GM12878 (cell line): ENCODE measurements at regions of chr12 and their contacts with region 1.

Region 1: GRCh38 chr12:11581179-11581755 is 68.2 kb upstream of the ETV6 start:
- DNase-seq: no peak
- ATAC-seq: no peak
- H3K4me3 ChIP-seq: no peak overlapping the region
- H3K27ac ChIP-seq: peak overlapping the region; percentile 48; the same call in 1 of the 2 replicates
- H3K4me1 ChIP-seq: peaks cover 38% of the 10 kb centered on the region
- H3K27me3 ChIP-seq: no peaks in the 10 kb centered on the region
- CTCF ChIP-seq: peak; percentile 34 to 58 (median 37); a peak in 3 of 6 replicates
- EP300 ChIP-seq: no peak
- POLR2A ChIP-seq: no peak
- RAD21 ChIP-seq: peak; percentile 91

Region 2: DNA sequence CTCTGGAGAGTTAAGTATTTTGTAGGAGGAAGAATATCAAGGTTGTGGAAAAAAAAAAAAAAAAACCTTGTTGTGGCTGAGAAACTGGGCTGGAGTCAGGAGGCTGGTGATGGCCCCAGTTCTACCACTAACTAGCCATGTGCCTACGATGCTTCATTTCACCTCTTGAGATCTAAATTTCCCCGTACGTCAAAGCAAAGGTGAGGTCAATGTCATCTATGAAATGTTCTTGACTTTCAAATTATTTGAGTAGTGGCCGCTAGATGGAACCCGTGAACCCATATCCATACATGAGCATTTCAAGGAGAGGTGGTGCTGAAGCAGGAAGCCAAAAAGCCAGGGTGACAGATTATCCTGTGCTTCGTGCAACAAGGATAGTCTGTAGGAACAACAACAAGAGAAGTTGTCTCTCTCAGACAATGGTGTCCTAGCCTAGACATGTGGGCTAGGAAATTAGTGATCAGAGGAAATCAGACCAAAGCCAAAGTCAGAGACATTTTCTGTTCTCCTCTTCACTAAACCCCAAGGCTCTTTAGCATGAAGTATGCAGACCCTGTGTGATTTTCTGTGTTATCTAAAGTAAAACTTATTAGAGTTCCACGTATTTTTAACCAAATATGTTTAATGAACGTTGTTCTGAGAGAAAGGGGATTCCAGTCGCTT is 27.3 kb before region 1 on chr12:
- CTCF ChIA-PET with region 1: interaction called, 148 read pairs
- POLR2A ChIA-PET with region 1: interaction called, 64 read pairs
- RAD21 ChIA-PET with region 1: interaction called, 322 read pairs
- SMC1A ChIA-PET with region 1: interaction called, 225 read pairs
- in situ Hi-C with region 1: no loop called
- intact Hi-C with region 1: loop called (anchors 1 kb)
- DNase-seq: peak; percentile 88
- ATAC-seq: peak; percentile 87
- H3K4me3 ChIP-seq: no peak overlapping the region
- H3K27ac ChIP-seq: peak overlapping the region; percentile 70
- H3K4me1 ChIP-seq: peaks cover 4% of the 10 kb centered on the region; the same call in 1 of the 2 replicates
- H3K27me3 ChIP-seq: no peaks in the 10 kb centered on the region
- CTCF ChIP-seq: peak; percentile 61 to 77 (median 63)
- EP300 ChIP-seq: peak; percentile 45 to 58; a peak in 2 of 4 replicates
- POLR2A ChIP-seq: no peak
- RAD21 ChIP-seq: peak; percentile 88

Region 3: DNA sequence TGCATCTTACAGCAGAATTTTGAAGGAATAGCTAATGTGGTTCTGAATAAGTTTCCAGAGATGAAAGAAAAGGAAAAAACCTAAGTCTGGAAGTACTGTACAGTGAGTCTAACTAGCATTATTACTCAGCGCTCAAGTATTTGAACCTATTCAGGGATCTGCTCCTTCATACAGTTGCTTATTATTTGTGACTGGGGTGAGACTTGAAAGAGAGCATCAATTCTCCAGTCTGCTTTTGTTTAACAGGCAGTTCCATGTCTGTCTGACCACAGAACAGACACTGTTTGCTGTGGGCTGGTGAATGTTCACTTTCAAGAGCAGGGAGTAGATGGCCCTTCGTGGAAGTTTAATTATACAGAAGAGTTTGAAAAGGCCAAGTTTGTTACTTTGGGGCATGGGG is 77.5 kb after region 1 on chr12:
- CTCF ChIA-PET with region 1: interaction called, 4 read pairs
- POLR2A ChIA-PET with region 1: interaction called, 3 read pairs
- RAD21 ChIA-PET with region 1: interaction called, 13 read pairs
- SMC1A ChIA-PET with region 1: interaction called, 28 read pairs
- in situ Hi-C with region 1: no loop called
- intact Hi-C with region 1: no loop called
- DNase-seq: no peak
- ATAC-seq: no peak
- H3K4me3 ChIP-seq: no peak overlapping the region
- H3K27ac ChIP-seq: no peak overlapping the region
- H3K4me1 ChIP-seq: peaks cover 23% of the 10 kb centered on the region
- H3K27me3 ChIP-seq: no peaks in the 10 kb centered on the region
- CTCF ChIP-seq: no peak
- EP300 ChIP-seq: no peak
- POLR2A ChIP-seq: no peak
- RAD21 ChIP-seq: no peak

Region 4: GRCh38 chr12:11688831-11689230 is 107.6 kb after region 1 on chr12:
- CTCF ChIA-PET with region 1: no interaction called
- POLR2A ChIA-PET with region 1: no interaction called
- RAD21 ChIA-PET with region 1: no interaction called
- SMC1A ChIA-PET with region 1: no interaction called
- in situ Hi-C with region 1: no loop called
- intact Hi-C with region 1: no loop called
- DNase-seq: no peak
- ATAC-seq: no peak
- H3K4me3 ChIP-seq: no peak overlapping the region
- H3K27ac ChIP-seq: no peak overlapping the region
- H3K4me1 ChIP-seq: peaks cover 10% of the 10 kb centered on the region
- H3K27me3 ChIP-seq: no peaks in the 10 kb centered on the region
- CTCF ChIP-seq: no peak
- EP300 ChIP-seq: no peak
- POLR2A ChIP-seq: no peak
- RAD21 ChIP-seq: no peak

Region 5: DNA sequence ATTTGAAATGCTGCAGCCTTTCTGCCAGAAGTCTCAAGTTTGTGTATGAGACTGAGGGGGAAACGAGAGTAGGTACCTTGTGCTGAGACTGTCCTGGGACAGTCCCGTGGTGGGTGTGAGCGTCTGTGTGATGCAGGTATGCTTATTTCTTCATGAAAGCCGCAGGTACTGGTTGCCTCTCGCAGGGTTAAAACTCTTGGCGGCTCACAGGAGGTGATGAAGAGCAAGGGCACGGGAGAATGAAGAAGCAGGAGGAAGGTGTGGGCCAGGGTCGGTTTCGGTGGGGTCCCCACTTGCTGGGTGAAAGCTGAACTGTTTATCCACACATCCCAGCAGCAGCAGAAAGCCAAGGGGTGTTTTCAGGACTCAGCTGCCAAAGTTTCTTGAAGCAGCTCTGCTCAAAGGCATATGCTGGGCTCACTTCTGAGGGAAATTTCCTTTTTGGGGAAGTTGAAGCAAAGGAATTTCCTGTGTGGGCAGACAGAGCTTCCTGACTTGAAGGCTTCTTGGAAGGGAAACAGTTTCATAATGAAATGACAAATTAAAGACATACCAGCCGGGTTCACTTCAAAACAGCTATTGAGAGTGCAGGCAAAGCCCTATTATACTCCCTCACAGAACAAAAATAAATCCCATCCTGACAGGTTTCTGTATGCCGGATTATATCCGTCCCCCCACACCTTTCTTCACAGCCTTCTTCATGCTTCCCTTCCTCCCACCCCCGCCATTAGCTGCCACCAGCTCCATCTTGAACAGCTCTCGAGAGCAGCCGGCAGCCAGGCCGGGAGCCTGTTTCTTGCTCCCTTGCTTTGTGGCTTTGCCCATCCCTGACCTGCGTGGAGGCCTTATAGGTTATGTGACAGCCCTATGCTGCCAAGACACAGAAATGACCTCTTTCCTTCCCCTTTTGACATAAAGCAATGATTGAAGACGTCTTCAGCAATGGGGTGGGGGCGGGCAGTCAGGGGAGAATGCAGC is 184.8 kb after region 1 on chr12:
- CTCF ChIA-PET with region 1: interaction called, 4 read pairs
- POLR2A ChIA-PET with region 1: interaction called, 6 read pairs
- RAD21 ChIA-PET with region 1: interaction called, 28 read pairs
- SMC1A ChIA-PET with region 1: interaction called, 70 read pairs
- in situ Hi-C with region 1: loop called (anchors 5 kb)
- intact Hi-C with region 1: no loop called
- DNase-seq: peak; percentile 92
- ATAC-seq: peak; percentile 75
- H3K4me3 ChIP-seq: peak overlapping the region; percentile 11; the same call in 1 of the 2 replicates
- H3K27ac ChIP-seq: peak overlapping the region; percentile 100
- H3K4me1 ChIP-seq: peaks cover 92% of the 10 kb centered on the region
- H3K27me3 ChIP-seq: no peaks in the 10 kb centered on the region
- CTCF ChIP-seq: no peak
- EP300 ChIP-seq: peak; percentile 81 to 89
- POLR2A ChIP-seq: 0 out of 2 replicates have a peak, but pooled peaks have one; percentile 32
- RAD21 ChIP-seq: peak; percentile 19; the same call in 1 of the 2 replicates

Region 6: DNA sequence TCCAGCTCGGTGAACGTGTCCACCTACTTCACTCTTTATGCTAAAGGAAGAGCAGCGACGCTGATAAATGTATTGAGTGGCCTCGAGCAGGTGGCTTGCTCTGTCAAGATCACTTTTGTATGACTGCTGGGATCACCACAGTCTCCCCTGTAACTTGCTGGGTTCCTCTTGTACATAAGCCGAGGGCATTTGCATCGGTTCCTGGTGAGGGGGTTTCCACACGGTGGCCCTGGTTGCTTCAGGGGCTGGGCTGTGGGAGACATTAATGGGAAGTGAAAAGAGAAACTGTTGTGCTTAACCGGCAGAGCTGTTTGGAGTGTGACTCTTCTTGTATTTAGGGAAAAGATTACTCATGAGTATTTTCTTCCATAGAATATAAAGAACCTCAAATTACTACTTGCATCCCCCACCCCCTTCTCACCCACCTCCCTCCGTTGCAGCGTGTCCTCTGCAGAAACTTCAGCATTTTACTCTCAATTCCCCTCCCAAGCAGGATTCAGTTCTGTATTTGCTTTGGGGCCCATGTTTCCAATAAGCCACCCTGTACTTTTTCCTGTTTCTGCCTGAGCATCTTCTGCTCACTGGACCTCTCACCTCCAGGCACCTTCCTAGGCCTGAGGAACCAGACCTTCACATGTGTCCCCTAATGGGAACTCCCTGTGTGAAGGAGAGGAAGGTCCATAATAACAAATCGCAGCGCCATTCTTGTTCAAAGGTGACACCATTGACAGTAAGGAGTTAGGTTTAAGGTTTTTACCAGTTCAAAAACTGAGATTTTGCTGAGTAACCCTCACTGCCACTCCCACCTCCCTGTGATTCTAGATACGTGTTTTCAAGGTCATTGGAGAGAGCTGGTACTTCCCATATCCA is 255.2 kb after region 1 on chr12:
- CTCF ChIA-PET with region 1: interaction called, 9 read pairs
- POLR2A ChIA-PET with region 1: no interaction called
- RAD21 ChIA-PET with region 1: interaction called, 4 read pairs
- SMC1A ChIA-PET with region 1: interaction called, 13 read pairs
- in situ Hi-C with region 1: no loop called
- intact Hi-C with region 1: no loop called
- DNase-seq: peak; percentile 99
- ATAC-seq: peak; percentile 89
- H3K4me3 ChIP-seq: no peak overlapping the region
- H3K27ac ChIP-seq: peak overlapping the region; percentile 97
- H3K4me1 ChIP-seq: peaks cover 76% of the 10 kb centered on the region
- H3K27me3 ChIP-seq: no peaks in the 10 kb centered on the region
- CTCF ChIP-seq: no peak
- EP300 ChIP-seq: peak; percentile 90 to 99
- POLR2A ChIP-seq: peak; percentile 68
- RAD21 ChIP-seq: peak; percentile 25; the same call in 1 of the 2 replicates

Region 7: GRCh38 chr12:12070674-12071656 is 489.7 kb after region 1 on chr12 and contains the start of gene BCL2L14:
- CTCF ChIA-PET with region 1: interaction called, 6 read pairs
- POLR2A ChIA-PET with region 1: no interaction called
- RAD21 ChIA-PET with region 1: interaction called, 11 read pairs
- SMC1A ChIA-PET with region 1: interaction called, 7 read pairs
- in situ Hi-C with region 1: no loop called
- intact Hi-C with region 1: no loop called
- DNase-seq: peak; percentile 36
- ATAC-seq: peak; percentile 86
- H3K4me3 ChIP-seq: peak within 1 kb of the TSS; percentile 72
- H3K27ac ChIP-seq: peak within 1 kb of the TSS; percentile 70
- H3K4me1 ChIP-seq: peaks cover 7% of the 10 kb centered on the region
- H3K27me3 ChIP-seq: no peaks in the 10 kb centered on the region
- CTCF ChIP-seq: no peak; a peak in 1 of 6 replicates
- EP300 ChIP-seq: no peak
- POLR2A ChIP-seq: no peak
- RAD21 ChIP-seq: no peak
- polyA plus RNA-seq, gene BCL2L14: 0.62 to 0.64 TPM

Region 8: GRCh38 chr12:12611512-12612306 is 1030.4 kb after region 1 on chr12 and contains the start of gene CREBL2:
- CTCF ChIA-PET with region 1: no interaction called
- POLR2A ChIA-PET with region 1: no interaction called
- RAD21 ChIA-PET with region 1: no interaction called
- SMC1A ChIA-PET with region 1: no interaction called
- in situ Hi-C with region 1: no loop called
- intact Hi-C with region 1: no loop called
- DNase-seq: peak; percentile 80
- ATAC-seq: peak; percentile 82
- H3K4me3 ChIP-seq: peak within 1 kb of the TSS; percentile 86
- H3K27ac ChIP-seq: peak within 1 kb of the TSS; percentile 94
- H3K4me1 ChIP-seq: peaks cover 17% of the 10 kb centered on the region
- H3K27me3 ChIP-seq: no peaks in the 10 kb centered on the region
- CTCF ChIP-seq: no peak
- EP300 ChIP-seq: no peak
- POLR2A ChIP-seq: peak; percentile 92
- RAD21 ChIP-seq: no peak
- polyA plus RNA-seq, gene CREBL2: 4.6 to 5.2 TPM